Endothelial cell of umbilical vein (primary cell): ENCODE measurements at regions of chr9 and their contacts with region 1.

Region 1: DNA sequence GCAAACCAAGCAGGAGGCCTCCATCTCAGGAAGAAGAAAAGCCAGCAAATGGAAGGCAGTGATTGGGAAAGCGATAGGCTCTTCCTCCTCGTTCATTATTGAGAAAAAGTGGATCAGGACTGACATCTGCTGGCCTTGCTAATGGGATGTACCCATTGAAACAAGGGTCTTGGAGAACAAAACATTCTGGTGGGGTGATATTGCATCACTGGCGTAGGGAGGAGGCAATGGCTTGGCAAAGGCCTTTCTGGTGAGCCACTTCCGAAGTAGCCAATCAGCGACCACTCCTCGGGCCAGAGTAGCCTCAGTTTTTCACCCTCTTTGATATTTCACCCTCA is 86.7 kb upstream of the NFIB start:
- DNase-seq: peak; percentile 90
- H3K4me3 ChIP-seq: no peak overlapping the region
- H3K27ac ChIP-seq: peak overlapping the region; percentile 80
- H3K4me1 ChIP-seq: peaks cover 16% of the 10 kb centered on the region
- H3K27me3 ChIP-seq: no peaks in the 10 kb centered on the region
- CTCF ChIP-seq: peak; percentile 58
- POLR2A ChIP-seq: no peak

Region 2: GRCh38 chr9:13033959-13034693 is 1366.5 kb before region 1 on chr9:
- CTCF ChIA-PET with region 1: interaction called, 4 read pairs
- POLR2A ChIA-PET with region 1: no interaction called
- dilution Hi-C with region 1: no loop called
- intact Hi-C with region 1: loop called (anchors 1 kb)
- DNase-seq: peak; percentile 75
- H3K4me3 ChIP-seq: no peak overlapping the region
- H3K27ac ChIP-seq: no peak overlapping the region
- H3K4me1 ChIP-seq: no peaks in the 10 kb centered on the region
- H3K27me3 ChIP-seq: no peaks in the 10 kb centered on the region
- CTCF ChIP-seq: peak; percentile 77 to 81
- POLR2A ChIP-seq: no peak

Region 3: DNA sequence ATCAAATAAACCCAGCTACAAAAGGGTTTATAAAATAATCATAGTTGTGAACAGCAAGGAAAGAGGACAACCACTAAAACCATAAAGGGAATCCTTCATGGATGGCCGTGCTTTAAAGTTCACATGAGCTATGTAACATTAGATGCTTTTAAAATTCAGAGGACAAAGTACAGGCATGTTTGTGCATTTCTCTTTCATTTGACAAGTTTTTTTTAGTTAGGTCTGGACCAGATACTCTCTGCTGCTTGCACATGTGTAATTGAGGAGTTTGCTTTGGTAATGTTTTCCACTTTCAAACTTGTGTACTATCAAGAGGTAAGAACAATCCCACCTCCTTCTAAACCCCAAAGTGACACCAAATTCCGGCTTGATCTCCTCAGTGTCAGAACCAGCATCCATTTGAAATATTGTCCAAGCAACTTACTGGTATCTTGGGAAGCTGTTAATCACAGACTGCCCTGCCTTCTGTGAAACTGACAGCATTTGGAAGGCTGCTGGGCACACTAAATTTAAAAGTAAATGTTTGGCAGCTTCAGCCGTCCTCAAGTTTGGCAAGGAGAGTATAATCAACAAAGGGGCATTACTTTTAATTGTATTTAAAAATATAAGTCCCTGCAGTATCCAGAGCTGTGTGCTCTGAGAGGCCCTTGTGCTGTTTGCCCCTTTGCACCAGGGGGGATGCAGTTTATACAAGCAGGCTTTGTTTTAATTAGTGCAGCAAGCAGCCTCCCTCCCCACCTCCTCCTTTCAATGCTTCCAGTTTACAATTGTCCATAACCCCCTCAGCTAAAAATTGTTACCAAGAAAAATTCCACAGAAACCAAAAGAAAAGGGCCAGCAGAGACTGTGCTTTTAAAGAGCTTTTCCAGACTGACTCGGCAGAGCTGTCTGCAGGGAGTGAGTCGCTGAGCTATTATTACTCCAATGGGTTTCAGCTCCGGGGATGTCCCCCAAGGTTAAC is 792.9 kb before region 1 on chr9:
- CTCF ChIA-PET with region 1: interaction called, 4 read pairs
- POLR2A ChIA-PET with region 1: no interaction called
- dilution Hi-C with region 1: no loop called
- intact Hi-C with region 1: loop called (anchors 10 kb)
- DNase-seq: peak; percentile 27
- H3K4me3 ChIP-seq: no peak overlapping the region
- H3K27ac ChIP-seq: no peak overlapping the region
- H3K4me1 ChIP-seq: peaks cover 18% of the 10 kb centered on the region
- H3K27me3 ChIP-seq: no peaks in the 10 kb centered on the region
- CTCF ChIP-seq: no peak
- POLR2A ChIP-seq: no peak

Region 4: GRCh38 chr9:14030375-14031059 is 370.1 kb before region 1 on chr9:
- CTCF ChIA-PET with region 1: no interaction called
- POLR2A ChIA-PET with region 1: no interaction called
- dilution Hi-C with region 1: no loop called
- intact Hi-C with region 1: loop called (anchors 2 kb)
- DNase-seq: peak; percentile 97
- H3K4me3 ChIP-seq: peak overlapping the region in 2 of 3 experiments; percentile 25 to 46
- H3K27ac ChIP-seq: peak overlapping the region; percentile 88
- H3K4me1 ChIP-seq: peaks cover 44% of the 10 kb centered on the region
- H3K27me3 ChIP-seq: no peaks in the 10 kb centered on the region
- CTCF ChIP-seq: no peak
- POLR2A ChIP-seq: peak; percentile 31

Region 5: DNA sequence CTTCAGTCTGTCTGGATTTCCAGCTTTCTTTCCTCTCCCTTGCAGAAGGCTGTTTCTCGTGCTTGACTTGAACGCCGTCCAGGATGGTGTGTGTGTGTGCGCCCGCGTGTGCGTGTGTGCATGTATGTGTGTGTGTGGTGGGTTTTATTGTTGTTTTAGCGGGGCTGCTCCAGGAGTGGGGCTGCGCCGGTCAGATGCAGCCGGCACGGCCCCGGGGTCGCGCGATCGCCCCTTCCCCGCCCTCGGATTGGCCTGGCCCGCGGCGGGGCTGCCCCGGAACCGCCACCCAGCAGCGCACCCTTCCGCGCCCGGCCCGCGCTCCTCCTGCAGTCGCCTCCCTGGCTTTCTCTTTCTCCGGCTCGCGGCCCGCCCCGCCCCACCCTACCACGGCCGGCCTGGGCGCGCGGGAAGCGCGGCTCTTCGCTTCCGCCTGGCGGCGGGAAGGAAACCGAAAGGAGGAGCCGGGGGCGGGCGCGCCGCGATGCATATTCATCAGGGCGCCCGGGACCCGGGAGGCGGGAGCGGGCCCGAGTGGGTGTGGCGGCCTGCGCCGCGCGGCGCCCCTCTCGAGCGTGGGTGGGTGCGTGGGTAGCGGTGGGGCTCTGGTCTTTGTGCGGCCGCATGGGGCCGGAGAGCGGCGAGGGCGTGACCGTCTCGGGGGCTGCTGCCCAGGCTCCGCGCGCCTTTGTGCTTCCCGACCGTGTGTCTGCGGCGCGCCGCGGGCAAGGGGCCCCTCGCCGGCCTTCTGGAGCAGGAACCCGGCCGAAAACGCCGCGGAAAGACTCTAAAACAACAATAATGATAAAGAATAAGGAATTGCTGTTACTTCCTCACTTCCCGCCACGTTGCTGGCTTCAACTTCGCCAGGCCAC is 78.2 kb before region 1 on chr9:
- CTCF ChIA-PET with region 1: interaction called, 7 read pairs
- POLR2A ChIA-PET with region 1: no interaction called
- dilution Hi-C with region 1: no loop called
- intact Hi-C with region 1: loop called (anchors 1 kb)
- DNase-seq: peak; percentile 93
- H3K4me3 ChIP-seq: peak overlapping the region; percentile 44 to 91 (median 79)
- H3K27ac ChIP-seq: peak overlapping the region; percentile 94
- H3K4me1 ChIP-seq: peaks cover 62% of the 10 kb centered on the region
- H3K27me3 ChIP-seq: no peaks in the 10 kb centered on the region
- CTCF ChIP-seq: peak in 1 of 2 donors; percentile 17
- POLR2A ChIP-seq: peak; percentile 59

Region 6: GRCh38 chr9:14380061-14380836 is 20.4 kb before region 1 on chr9:
- CTCF ChIA-PET with region 1: interaction called, 13 read pairs
- POLR2A ChIA-PET with region 1: no interaction called
- dilution Hi-C with region 1: no loop called
- intact Hi-C with region 1: no loop called
- DNase-seq: peak; percentile 78
- H3K4me3 ChIP-seq: no peak overlapping the region
- H3K27ac ChIP-seq: peak overlapping the region; percentile 32
- H3K4me1 ChIP-seq: peaks cover 13% of the 10 kb centered on the region
- H3K27me3 ChIP-seq: no peaks in the 10 kb centered on the region
- CTCF ChIP-seq: no peak
- POLR2A ChIP-seq: peak; percentile 64